ENCODE measurements at regions of chr11 and their contacts with region 1.

Region 1: GRCh38 chr11:61947486-61948210 is 2.5 kb upstream of the BEST1 start:
- DNase-seq: no peak
- H3K4me3 ChIP-seq: no peak overlapping the region
- CTCF ChIP-seq: peak; percentile 94

Region 2: DNA sequence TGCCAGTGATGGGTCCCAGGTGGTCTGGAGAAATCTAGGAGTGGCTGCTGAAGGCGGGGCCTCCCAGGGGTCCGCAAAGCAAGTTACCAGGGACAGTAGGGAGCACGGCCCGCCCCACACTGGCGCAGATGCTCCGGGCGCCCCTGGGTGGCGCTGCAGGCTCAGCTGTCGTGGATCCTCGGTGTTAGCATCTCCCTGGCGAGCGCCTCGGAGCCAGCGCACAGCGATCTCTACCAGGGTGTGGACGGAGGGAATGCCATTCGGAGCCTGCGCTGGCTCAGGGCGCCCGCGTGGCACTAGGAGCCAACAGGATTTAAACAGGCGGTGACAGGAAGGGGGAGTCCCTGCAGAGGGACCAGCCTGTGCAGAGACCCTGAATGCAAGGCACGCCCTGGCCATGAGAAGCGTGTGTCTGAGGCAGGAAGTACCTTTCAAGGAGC is 76.5 kb before region 1 on chr11:
- CTCF ChIA-PET with region 1: interaction called, 233 read pairs
- POLR2A ChIA-PET with region 1: no interaction called
- DNase-seq: peak; percentile 12
- H3K4me3 ChIP-seq: peak overlapping the region; percentile 21
- CTCF ChIP-seq: peak; percentile 97

Region 3: GRCh38 chr11:61908730-61909315 is 38.8 kb before region 1 on chr11:
- CTCF ChIA-PET with region 1: interaction called, 568 read pairs
- POLR2A ChIA-PET with region 1: no interaction called
- DNase-seq: no peak
- H3K4me3 ChIP-seq: no peak overlapping the region
- CTCF ChIP-seq: no peak

Region 4: DNA sequence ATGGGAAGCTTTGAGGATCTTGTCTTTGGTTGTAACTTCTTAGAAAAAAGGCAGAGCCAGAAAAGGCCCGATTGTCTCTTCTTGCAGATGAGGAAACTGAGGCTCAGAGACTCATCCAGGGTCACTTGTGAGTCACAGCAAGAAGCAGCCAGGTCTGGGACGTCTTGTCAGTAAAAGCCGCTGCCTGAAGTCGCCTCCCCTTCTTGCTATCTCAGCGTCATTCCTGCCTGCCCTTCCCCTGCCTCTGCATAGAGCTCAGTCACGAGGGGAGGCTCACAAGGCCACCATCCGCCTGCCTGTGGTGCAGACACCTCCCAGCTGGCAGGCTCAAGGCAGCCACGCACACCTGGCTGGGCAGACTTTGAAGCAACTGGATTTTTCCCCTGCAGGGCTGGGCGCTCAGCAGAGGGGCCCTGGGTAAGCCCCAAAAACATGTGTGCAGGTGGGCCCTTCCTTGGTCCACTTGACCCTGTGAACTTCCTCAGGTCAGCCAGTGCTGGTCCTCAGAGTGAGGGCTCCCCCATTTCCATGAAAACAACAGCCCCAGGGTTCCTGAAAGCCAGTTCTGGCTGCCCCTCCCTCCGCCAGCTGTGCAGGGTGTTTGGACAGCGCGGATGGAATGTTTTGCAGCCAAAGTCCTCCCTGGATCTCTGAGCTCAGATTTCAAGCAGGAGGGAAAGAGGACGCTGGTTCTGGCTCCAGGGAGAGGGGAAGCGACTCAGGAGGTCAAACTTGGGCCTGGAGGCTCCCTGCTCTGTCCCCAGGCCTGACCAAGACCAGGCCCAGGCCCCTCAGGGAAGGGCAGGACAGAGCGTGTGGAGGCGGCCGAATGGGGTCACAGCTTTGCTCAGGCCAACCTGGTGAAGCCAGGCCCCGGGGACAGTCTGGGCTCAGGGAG is 24.2 kb before region 1 on chr11:
- CTCF ChIA-PET with region 1: interaction called, 55 read pairs
- POLR2A ChIA-PET with region 1: interaction called, 3 read pairs
- DNase-seq: no peak
- H3K4me3 ChIP-seq: no peak overlapping the region
- CTCF ChIP-seq: no peak

Region 5: DNA sequence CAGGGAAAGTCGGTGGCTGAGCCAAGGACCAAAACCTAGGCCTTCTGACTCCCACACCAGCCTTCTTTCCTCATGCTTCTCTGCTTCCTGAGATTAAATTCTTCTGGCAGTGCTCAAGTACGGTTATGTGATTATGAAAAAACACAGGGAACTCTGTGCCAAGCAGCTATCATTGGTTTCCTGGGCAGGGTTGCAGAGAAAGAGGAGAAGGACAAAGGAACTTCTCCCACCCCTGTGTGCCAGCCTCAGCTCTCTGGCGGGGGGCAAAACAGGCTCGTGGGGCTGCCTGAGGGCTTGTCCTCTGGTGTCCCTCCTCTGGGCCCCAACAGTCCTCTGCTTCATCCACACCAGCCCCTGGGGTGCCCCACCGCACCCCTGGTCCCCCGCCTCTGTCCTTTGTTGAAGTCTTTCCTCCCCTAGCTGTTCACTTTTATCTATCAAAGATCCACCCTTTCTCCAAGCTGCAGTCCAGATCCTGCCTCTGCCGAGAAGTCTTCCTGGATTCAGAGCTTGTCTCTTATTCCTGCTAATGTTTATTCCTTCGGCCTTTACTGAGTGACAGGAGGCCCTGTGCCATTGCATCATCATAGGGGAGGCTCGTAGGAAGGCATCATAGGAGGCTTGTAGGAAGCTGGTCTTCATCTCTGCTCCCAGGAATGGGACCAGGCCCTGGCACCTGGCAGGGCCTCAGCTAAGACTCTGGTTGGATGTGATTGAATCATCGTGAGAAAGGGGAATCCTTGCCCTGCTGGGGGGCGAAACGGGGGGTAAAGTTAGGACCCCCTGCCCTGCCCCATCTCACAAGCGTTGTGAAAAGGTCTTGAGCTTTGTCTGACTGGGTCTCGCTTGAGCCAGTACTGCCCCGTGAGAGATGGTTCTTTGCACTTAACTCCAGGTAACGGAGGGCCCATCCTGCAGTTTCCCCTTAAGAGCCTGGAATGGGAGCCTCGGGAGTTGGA is 31.3 kb after region 1 on chr11:
- CTCF ChIA-PET with region 1: interaction called, 10 read pairs
- POLR2A ChIA-PET with region 1: no interaction called
- DNase-seq: no peak
- H3K4me3 ChIP-seq: no peak overlapping the region
- CTCF ChIP-seq: no peak

Region 6: DNA sequence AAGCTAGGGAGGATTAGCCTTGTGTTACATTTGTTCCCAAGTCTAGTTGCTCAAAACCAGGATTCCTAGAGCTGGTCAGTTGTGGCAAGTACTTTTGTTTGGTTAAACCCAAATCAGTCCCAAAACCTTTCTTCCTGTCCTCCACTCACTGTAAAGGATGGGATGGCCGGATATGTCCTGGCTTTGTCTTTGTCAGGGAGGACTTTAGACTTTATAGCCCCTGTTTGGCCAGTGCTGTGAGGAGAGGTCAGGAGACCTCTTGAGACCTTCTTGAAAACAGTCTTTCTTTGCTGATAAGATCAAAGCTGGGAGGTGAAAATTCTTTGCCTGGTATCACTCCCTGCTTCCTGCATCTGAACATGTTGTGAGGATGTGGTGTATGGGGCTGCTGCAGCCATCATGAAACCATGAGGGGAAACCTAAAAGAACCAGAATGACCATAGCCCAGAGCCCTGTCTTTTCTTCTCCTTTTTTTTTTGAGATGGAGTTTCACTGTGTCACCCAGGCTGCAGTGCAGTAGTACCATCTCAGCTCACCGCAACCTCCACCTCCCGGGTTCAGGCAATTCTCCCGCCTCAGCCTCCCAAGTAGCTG is 63.4 kb after region 1 on chr11:
- CTCF ChIA-PET with region 1: no interaction called
- POLR2A ChIA-PET with region 1: no interaction called
- DNase-seq: no peak
- H3K4me3 ChIP-seq: no peak overlapping the region
- CTCF ChIP-seq: no peak